A549 (cell line): ENCODE measurements at regions of chr1 and their contacts with region 1.

Region 1: GRCh38 chr1:212665241-212666115 is 34.2 kb downstream of the BATF3 start:
- DNase-seq: peak; percentile 82 to 87
- ATAC-seq: peak; percentile 92 to 95
- H3K4me3 ChIP-seq: peak overlapping the region; percentile 45
- H3K27ac ChIP-seq: peak overlapping the region; percentile 77 to 90
- H3K4me1 ChIP-seq: peaks cover 39% of the 10 kb centered on the region
- CTCF ChIP-seq: peak; percentile 93
- EP300 ChIP-seq: no peak
- POLR2A ChIP-seq: peak; percentile 38
- RAD21 ChIP-seq: peak; percentile 85 to 98

Region 2: DNA sequence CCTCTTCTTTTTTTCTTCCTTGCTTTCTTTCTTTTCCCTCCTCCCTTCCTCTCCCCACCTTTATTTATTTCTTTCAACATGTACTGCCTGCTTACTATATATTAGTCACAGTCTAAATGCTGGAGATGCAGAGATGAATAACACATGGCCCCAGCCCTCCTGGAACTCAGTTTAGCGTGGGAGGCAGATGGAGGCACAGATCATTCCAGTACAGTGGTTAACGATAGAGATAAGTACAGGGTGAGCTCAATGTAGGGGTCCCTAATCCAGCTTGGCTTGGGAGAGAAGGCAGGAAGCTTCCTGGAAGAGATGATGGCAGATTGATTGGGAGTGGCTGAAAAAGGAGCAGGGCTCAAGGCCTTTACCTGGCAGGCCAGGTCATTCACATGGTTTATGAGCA is 435.8 kb before region 1 on chr1:
- CTCF ChIA-PET with region 1: no interaction called
- POLR2A ChIA-PET with region 1: no interaction called
- DNase-seq: no peak
- ATAC-seq: no peak
- H3K4me3 ChIP-seq: no peak overlapping the region
- H3K27ac ChIP-seq: no peak overlapping the region
- H3K4me1 ChIP-seq: peaks cover 19% of the 10 kb centered on the region
- CTCF ChIP-seq: no peak
- EP300 ChIP-seq: no peak
- POLR2A ChIP-seq: no peak
- RAD21 ChIP-seq: no peak

Region 3: DNA sequence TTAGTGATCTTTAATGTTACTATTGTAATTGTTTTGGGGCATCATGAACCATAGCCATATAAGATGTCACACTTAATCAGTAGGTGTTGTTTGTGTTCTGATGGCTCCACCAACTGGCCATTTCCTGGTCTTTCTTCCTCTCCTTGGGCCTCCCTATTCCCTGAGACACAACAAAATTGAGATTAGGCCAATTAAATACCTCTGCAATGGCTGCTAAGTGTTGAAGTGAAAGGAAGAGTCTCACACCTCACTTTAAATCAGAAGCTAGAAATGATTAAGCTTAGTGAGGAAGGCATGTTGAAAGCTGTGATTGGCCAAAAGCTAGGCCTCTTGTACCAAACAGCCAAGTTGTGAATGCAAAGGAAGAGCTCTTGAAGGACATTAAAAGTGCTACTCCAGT is 349.6 kb before region 1 on chr1:
- CTCF ChIA-PET with region 1: no interaction called
- POLR2A ChIA-PET with region 1: no interaction called
- DNase-seq: peak in 1 of 2 experiments; percentile 45
- ATAC-seq: peak; percentile 59 to 78; a peak in 4 of 6 replicates
- H3K4me3 ChIP-seq: no peak overlapping the region
- H3K27ac ChIP-seq: no peak overlapping the region
- H3K4me1 ChIP-seq: no peaks in the 10 kb centered on the region; the same call in 2 of the 3 replicates
- CTCF ChIP-seq: peak; percentile 46
- EP300 ChIP-seq: no peak
- POLR2A ChIP-seq: no peak
- RAD21 ChIP-seq: peak; percentile 52 to 66

Region 4: DNA sequence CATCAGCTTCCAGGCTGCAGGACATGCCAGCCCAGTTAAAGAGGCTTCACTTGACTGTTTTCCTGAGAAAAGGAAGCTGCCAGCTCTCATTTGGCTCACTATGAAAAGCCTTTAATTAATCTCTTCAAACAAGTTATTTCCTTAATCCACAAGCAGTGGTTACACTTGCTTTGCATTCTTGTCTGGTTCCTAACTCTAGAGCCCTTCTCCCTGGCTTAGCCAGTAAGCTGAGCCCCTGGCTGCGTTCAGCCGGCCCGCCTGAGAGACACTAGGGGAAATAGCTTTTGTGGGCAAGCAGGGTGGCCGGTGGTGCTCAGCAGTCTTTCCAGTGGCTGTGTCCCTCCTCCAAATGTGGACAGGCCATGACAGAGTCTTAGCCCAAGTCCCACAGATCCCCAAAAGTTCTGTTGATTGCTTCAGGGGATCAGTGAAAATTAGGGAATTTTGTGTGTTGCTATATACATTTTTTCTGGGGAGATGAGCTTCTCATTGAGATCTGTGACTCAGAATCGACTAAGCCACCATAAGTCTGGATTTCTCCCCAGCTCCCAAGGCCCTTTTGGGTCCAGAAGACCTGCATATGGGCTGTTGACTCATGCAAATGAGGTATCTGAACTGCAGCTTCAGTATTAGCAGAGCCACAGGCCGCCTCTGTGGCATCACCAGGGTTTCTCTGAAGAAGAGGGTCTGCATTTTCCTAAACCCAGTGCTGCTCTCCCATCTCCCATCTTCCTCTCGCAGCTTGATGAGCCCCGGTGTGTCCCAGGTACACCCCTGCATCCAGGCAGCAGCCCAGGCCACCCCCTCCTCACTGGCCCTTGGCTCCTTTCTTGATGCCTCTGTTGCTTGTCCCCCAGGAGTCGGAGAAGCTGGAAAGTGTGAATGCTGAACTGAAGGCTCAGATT is 46.7 kb before region 1 on chr1:
- CTCF ChIA-PET with region 1: interaction called, 16 read pairs
- POLR2A ChIA-PET with region 1: no interaction called
- DNase-seq: no peak
- ATAC-seq: no peak
- H3K4me3 ChIP-seq: no peak overlapping the region
- H3K27ac ChIP-seq: no peak overlapping the region
- H3K4me1 ChIP-seq: no peaks in the 10 kb centered on the region
- CTCF ChIP-seq: no peak
- EP300 ChIP-seq: no peak
- POLR2A ChIP-seq: no peak
- RAD21 ChIP-seq: no peak

Region 5: DNA sequence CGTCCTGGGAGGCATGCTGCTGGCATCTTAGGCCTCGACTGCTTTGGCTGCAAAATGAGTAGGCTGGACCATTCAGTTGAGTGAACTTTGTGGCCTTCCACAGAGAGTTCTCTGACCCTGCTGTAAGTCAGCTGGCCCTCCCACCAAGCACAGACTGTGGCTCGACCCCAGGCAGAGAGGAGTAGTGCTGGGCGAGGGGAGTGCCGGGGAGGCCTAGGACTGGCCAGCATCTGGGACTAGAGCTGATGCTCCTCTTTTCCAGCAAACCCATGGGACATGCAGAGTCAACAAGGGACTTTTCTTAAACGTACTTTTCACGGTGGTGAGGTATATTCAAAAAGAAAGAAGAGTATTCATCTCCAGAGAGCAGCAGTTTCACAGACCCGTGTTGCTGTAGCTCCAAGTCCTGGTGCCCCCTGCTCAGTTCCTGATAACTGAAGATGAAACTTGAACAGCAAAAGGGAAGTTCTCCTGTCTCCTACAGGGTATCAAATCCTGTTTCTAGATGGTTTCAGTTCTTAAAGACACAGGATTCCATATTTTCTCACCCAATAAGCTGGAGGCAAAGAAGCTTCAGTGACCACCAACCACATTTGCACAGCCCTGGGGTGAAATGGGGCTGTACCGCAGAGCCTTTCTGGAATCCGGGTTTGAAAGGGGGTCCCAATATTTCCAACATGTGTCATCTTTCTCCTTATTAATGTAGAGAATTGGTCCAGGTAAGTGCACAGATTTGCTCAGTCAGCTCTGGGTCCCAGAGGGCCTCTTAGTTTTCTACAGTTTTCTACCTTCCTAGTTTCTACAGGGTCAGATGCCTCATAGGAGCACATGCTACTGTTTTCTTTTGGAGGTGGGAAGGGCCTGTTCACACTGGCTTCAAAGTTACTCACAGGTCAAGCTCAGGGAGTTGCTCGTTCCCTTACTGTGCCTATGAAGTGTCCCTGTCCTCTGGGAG is 13.3 kb after region 1 on chr1:
- CTCF ChIA-PET with region 1: interaction called, 71 read pairs
- POLR2A ChIA-PET with region 1: no interaction called
- DNase-seq: no peak
- ATAC-seq: peak in 1 of 2 experiments; percentile 27; a peak in 3 of 6 replicates
- H3K4me3 ChIP-seq: no peak overlapping the region
- H3K27ac ChIP-seq: no peak overlapping the region
- H3K4me1 ChIP-seq: 0 out of 3 replicates have a peak, but pooled peaks cover 6% of the 10 kb centered on the region
- CTCF ChIP-seq: no peak
- EP300 ChIP-seq: no peak
- POLR2A ChIP-seq: no peak
- RAD21 ChIP-seq: no peak

Region 6: DNA sequence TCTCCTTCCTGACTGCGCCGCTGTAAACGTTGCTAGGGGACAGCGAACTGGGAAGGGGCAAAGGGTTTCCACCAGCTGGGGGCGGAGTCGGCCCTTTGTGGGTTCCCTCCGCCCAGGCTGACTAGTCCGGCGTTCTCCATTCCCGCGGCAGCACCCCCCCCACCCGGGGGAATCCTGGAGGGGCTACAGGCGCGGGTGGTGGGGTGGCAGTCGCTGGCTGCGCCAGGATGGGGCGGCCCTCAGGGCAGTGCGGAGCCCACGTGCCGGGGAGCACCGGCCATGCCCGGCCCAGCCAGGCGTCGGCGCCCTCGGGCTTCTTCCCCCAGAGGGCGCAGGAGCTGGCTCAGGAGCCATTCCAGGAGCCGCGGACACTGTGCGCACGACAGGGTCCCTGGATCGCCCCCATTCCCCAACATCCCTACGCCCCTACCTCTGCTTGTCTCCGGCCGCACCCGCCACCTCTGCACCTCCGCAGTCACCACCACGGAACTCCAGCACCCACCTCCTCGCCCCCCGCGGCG is 33.7 kb after region 1 on chr1:
- CTCF ChIA-PET with region 1: interaction called, 44 read pairs
- POLR2A ChIA-PET with region 1: interaction called, 4 read pairs
- DNase-seq: peak; percentile 66 to 72
- ATAC-seq: peak; percentile 85 to 88
- H3K4me3 ChIP-seq: peak overlapping the region; percentile 95
- H3K27ac ChIP-seq: peak overlapping the region; percentile 87 to 90
- H3K4me1 ChIP-seq: peaks cover 16% of the 10 kb centered on the region; the same call in 2 of the 3 replicates
- CTCF ChIP-seq: peak; percentile 84
- EP300 ChIP-seq: no peak
- POLR2A ChIP-seq: 0 out of 2 replicates have a peak, but pooled peaks have one; percentile 17
- RAD21 ChIP-seq: peak; percentile 33 to 71; a peak in 4 of 5 replicates

Region 7: GRCh38 chr1:212769459-212770167 is 104.1 kb after region 1 on chr1:
- CTCF ChIA-PET with region 1: interaction called, 14 read pairs
- POLR2A ChIA-PET with region 1: no interaction called
- DNase-seq: peak in 1 of 2 experiments; percentile 8
- ATAC-seq: no peak
- H3K4me3 ChIP-seq: no peak overlapping the region
- H3K27ac ChIP-seq: no peak overlapping the region
- H3K4me1 ChIP-seq: peaks cover 9% of the 10 kb centered on the region
- CTCF ChIP-seq: no peak
- EP300 ChIP-seq: no peak
- POLR2A ChIP-seq: no peak
- RAD21 ChIP-seq: no peak

Region 8: GRCh38 chr1:212987702-212988322 is 322.3 kb after region 1 on chr1:
- CTCF ChIA-PET with region 1: interaction called, 15 read pairs
- POLR2A ChIA-PET with region 1: no interaction called
- DNase-seq: peak in 1 of 2 experiments; percentile 37
- ATAC-seq: peak in 1 of 2 experiments; percentile 70; a peak in 3 of 6 replicates
- H3K4me3 ChIP-seq: no peak overlapping the region
- H3K27ac ChIP-seq: peak overlapping the region; percentile 33 to 40; a peak in 5 of 6 replicates
- H3K4me1 ChIP-seq: peaks cover 31% of the 10 kb centered on the region
- CTCF ChIP-seq: no peak
- EP300 ChIP-seq: no peak
- POLR2A ChIP-seq: no peak
- RAD21 ChIP-seq: no peak